ENCODE measurements at regions of chr2 and their contacts with region 1.

Region 1: GRCh38 chr2:236512902-236513435 is 56.7 kb upstream of the ACKR3 start:
- DNase-seq: peak; percentile 47
- ATAC-seq: peak; percentile 94
- H3K4me3 ChIP-seq: no peak overlapping the region
- H3K27ac ChIP-seq: no peak overlapping the region
- H3K4me1 ChIP-seq: no peaks in the 10 kb centered on the region
- H3K27me3 ChIP-seq: peaks cover 15% of the 10 kb centered on the region
- CTCF ChIP-seq: peak; percentile 79

Region 2: DNA sequence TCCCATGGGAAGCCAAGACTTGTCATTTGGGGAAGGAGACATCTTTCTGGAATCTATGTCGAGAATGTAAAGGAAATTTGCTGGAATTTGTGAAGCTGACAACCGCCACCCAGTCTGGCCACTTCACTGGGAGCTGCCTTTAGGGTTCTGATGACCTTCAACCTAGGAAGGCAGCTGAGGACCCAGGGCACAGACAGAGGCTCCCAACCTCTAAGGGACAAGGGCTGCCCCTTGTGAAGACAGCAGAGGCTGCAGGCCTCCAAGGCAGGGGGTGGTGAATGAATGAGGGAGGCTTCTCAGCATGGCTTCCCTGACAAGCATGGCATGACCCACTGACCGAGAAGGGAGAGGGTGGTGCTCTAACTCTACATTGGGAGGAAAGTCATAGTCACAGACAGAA is 119.9 kb before region 1 on chr2:
- CTCF ChIA-PET with region 1: no interaction called
- POLR2A ChIA-PET with region 1: no interaction called
- in situ Hi-C with region 1: no loop called
- intact Hi-C with region 1: no loop called
- DNase-seq: no peak
- ATAC-seq: no peak
- H3K4me3 ChIP-seq: no peak overlapping the region
- H3K27ac ChIP-seq: no peak overlapping the region
- H3K4me1 ChIP-seq: no peaks in the 10 kb centered on the region
- H3K27me3 ChIP-seq: peaks cover 3% of the 10 kb centered on the region
- CTCF ChIP-seq: no peak

Region 3: DNA sequence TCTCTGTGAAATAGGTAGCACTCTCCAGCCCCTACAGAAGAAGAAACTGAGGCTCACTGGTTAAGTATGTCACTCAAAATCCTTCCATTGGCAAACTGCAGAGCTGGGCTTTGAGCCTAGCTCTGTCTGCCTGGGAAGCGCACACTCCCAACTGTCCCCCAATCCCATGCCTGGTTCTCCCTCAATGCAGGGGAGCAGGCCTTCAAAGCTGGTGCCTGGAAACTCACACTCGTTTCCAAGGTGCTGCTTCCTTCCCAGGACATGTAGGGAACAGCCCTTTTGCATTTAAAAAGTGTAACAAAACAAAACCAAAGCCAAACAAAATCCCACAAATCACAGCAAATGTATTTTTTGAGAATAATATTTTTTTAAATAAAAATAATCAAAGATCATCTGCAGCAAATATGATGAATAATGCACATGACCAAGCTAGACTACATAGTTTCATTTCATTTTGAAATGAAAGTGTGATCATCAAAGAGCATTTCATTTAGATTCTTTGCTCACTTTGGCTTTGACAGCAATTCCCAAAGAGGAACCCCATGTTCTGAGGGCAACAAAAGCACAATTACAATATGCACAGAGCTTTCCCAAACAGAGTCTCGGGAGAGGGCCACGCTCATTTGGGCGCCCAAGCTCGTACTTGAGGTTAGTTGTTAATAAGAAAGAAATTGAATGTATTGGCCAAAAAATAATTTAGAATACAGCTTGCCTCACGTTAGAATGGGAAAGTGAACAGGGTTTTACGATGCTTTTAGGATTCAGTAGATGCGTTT is 40.1 kb before region 1 on chr2:
- CTCF ChIA-PET with region 1: no interaction called
- POLR2A ChIA-PET with region 1: no interaction called
- in situ Hi-C with region 1: no loop called
- intact Hi-C with region 1: no loop called
- DNase-seq: no peak
- ATAC-seq: no peak
- H3K4me3 ChIP-seq: no peak overlapping the region
- H3K27ac ChIP-seq: no peak overlapping the region
- H3K4me1 ChIP-seq: no peaks in the 10 kb centered on the region
- H3K27me3 ChIP-seq: 0 out of 2 replicates have a peak, but pooled peaks cover 2% of the 10 kb centered on the region
- CTCF ChIP-seq: no peak

Region 4: DNA sequence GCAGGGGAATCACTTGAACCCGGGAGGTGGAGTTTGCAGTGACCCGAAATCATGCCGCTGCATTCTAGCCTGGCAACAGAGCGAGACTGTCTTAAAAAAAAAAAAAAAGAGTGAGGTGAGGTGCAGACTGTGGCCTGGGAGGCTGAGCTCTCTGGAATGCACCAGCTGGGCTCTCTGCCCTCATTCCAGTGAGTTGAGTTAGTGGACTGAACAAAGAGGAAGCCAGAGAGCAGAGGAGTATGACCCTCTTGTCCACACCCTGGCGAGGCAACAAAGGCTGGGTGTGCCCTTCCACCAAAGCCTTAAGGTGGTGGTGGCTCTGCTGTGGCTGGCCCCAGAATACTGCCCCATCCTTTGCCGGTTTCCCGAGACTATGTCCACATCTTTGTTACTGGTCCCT is 14.6 kb before region 1 on chr2:
- CTCF ChIA-PET with region 1: no interaction called
- POLR2A ChIA-PET with region 1: no interaction called
- in situ Hi-C with region 1: no loop called
- intact Hi-C with region 1: no loop called
- DNase-seq: no peak
- ATAC-seq: no peak
- H3K4me3 ChIP-seq: no peak overlapping the region
- H3K27ac ChIP-seq: no peak overlapping the region
- H3K4me1 ChIP-seq: no peaks in the 10 kb centered on the region
- H3K27me3 ChIP-seq: 0 out of 2 replicates have a peak, but pooled peaks cover 2% of the 10 kb centered on the region
- CTCF ChIP-seq: no peak

Region 5: DNA sequence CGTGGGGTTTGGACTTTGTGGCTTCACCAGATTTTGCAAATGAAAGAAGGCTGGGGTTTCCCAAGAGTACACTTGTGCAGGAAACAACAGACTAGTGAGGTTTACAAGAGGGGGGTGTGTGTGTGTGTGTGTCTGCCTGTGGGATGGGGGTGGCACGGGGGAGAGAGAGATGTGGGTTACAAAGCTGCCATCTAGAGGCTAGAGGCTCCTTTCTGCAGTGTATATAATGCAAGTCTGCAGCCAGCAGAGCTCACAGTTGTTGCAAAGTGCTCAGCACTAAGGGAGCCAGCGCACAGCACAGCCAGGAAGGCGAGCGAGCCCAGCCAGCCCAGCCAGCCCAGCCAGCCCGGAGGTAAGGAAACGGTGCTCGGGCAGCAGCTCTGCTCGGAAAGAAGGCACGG is 56.6 kb after region 1 on chr2 and contains the start of gene ACKR3:
- CTCF ChIA-PET with region 1: interaction called, 4 read pairs
- POLR2A ChIA-PET with region 1: no interaction called
- in situ Hi-C with region 1: no loop called
- intact Hi-C with region 1: loop called (anchors 2 kb)
- DNase-seq: peak; percentile 7
- ATAC-seq: peak; percentile 94
- H3K4me3 ChIP-seq: no peak within 1 kb of the TSS; a peak in 1 of 4 replicates
- H3K27ac ChIP-seq: no peak within 1 kb of the TSS
- H3K4me1 ChIP-seq: peaks cover 9% of the 10 kb centered on the region
- H3K27me3 ChIP-seq: peaks cover 43% of the 10 kb centered on the region
- CTCF ChIP-seq: peak; percentile 71; the same call in 1 of the 2 replicates
- total RNA-seq, gene ACKR3: not detected

Region 6: GRCh38 chr2:237060534-237061312 is 547.8 kb after region 1 on chr2:
- CTCF ChIA-PET with region 1: interaction called, 3 read pairs
- POLR2A ChIA-PET with region 1: no interaction called
- in situ Hi-C with region 1: no loop called
- intact Hi-C with region 1: loop called (anchors 5 kb)
- DNase-seq: peak; percentile 45
- ATAC-seq: peak; percentile 87
- H3K4me3 ChIP-seq: no peak overlapping the region
- H3K27ac ChIP-seq: no peak overlapping the region
- H3K4me1 ChIP-seq: no peaks in the 10 kb centered on the region; the same call in 1 of the 2 replicates
- H3K27me3 ChIP-seq: 0 out of 2 replicates have a peak, but pooled peaks cover 2% of the 10 kb centered on the region
- CTCF ChIP-seq: peak; percentile 84

Region 7: DNA sequence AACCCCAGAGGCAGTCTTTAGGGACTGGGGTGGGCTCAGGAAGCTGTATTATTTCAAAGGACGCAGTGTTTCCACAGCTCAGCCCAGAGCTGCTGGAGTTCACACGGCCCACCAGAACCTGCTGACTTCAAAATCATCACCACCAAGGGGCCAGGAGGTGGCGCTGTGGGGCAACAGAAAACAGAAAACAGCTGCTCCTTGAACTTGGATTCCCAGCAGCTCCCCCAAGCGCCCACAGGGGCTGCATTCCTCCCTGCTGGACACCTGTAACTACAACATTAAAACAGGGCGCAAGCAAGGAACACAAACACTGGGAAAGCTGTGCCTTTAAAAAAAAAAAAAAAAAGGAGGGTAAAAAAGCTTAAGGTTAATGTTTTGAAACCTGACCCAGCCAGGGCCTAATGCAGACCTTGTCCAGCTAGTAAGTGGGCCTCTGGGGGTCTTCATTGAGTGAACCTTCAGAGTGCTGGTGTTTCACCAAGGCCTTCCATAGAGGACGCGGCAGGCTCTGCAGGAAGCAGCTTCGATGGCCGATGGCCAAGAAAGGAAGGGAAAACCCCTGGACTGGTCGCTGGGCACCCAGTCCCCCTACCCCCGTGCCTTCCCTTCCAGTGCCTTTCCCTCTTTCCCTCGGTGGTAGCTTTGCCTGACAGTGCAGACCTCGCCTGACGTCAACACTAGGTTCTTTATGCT is 1000.0 kb after region 1 on chr2:
- CTCF ChIA-PET with region 1: interaction called, 10 read pairs
- POLR2A ChIA-PET with region 1: no interaction called
- in situ Hi-C with region 1: no loop called
- intact Hi-C with region 1: no loop called
- DNase-seq: peak; percentile 52
- ATAC-seq: peak; percentile 91
- H3K4me3 ChIP-seq: no peak overlapping the region
- H3K27ac ChIP-seq: peak overlapping the region; percentile 39; the same call in 1 of the 2 replicates
- H3K4me1 ChIP-seq: peaks cover 8% of the 10 kb centered on the region
- H3K27me3 ChIP-seq: no peaks in the 10 kb centered on the region
- CTCF ChIP-seq: peak; percentile 97